Ascending aorta (tissue), 2 donors: ENCODE measurements at regions of chr7 and their contacts with region 1.

Region 1: GRCh38 chr7:25851332-25852210 is 300.4 kb upstream of the NFE2L3 start:
- DNase-seq: peak; percentile 62 to 92
- H3K4me3 ChIP-seq: peak overlapping the region; percentile 27 to 53
- H3K27ac ChIP-seq: peak overlapping the region; percentile 65 to 76
- H3K4me1 ChIP-seq: peaks cover 27 to 54% of the 10 kb centered on the region in 2 donors
- H3K27me3 ChIP-seq: no peaks in the 10 kb centered on the region
- CTCF ChIP-seq: peak; percentile 85 to 89 (median 88)

Region 2: DNA sequence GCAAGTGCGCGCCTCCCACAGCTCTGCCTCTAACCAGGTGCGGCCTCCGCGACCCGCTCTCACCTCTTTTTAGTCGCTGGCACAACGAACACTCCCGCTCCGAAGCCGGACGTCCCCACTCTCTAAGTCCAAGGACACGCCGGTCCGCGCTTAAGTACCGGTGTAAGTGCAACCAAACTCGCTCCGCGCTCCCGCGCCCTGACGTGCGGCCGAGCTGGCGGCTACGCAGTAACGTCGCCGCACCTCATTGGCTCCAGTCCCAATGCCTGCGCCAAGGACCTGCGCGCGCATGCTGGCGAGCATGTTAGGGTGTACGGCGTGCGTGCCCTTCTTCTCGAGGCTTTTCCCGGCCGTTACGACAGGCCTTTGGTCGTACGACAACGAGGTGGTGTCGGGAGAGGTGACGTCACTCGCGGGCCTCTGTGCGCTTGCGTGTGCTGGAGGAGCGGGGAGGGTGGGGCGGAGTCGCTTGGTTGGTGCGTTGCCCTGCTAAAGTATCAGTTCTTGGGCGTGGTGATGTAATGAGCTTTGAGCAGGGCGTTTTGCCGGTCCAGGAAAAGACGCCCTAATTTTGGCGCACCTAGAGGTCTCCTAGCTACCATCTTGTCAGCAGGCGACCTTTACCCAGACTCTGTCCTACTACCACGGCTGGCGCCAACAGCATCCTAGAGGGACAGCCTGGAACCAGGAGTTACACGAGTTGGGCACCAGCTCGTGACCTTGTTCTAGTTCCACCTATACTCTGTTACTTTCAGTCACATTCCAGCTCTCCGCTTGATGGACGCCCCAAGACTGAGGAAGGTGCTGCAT is 726.2 kb before region 1 on chr7 and contains the start of gene CYCS:
- intact Hi-C with region 1: loop called (anchors 5 kb)
- DNase-seq: peak; percentile 98 to 100
- H3K4me3 ChIP-seq: peak within 1 kb of the TSS; percentile 82 to 100
- H3K27ac ChIP-seq: peak within 1 kb of the TSS; percentile 90 to 99
- H3K4me1 ChIP-seq: peaks cover 0 to 4% of the 10 kb centered on the region in 2 donors
- H3K27me3 ChIP-seq: no peaks in the 10 kb centered on the region
- CTCF ChIP-seq: no peak
- total RNA-seq, gene CYCS: 11.5 TPM

Region 3: GRCh38 chr7:25259587-25260243 is 591.9 kb before region 1 on chr7:
- intact Hi-C with region 1: loop called (anchors 1 kb)
- DNase-seq: peak; percentile 9 to 82
- H3K4me3 ChIP-seq: no peak overlapping the region
- H3K27ac ChIP-seq: no peak overlapping the region
- H3K4me1 ChIP-seq: peaks cover 0 to 3% of the 10 kb centered on the region in 2 donors
- H3K27me3 ChIP-seq: no peaks in the 10 kb centered on the region
- CTCF ChIP-seq: peak; percentile 59 to 74 (median 71)

Region 4: GRCh38 chr7:25619963-25620799 is 231.4 kb before region 1 on chr7:
- intact Hi-C with region 1: loop called (anchors 5 kb)
- DNase-seq: no peak
- H3K4me3 ChIP-seq: no peak overlapping the region
- H3K27ac ChIP-seq: peak overlapping the region; percentile 21 to 54
- H3K4me1 ChIP-seq: peaks cover 17 to 37% of the 10 kb centered on the region in 2 donors
- H3K27me3 ChIP-seq: no peaks in the 10 kb centered on the region
- CTCF ChIP-seq: no peak

Region 5: GRCh38 chr7:25752967-25753791 is 98.4 kb before region 1 on chr7:
- intact Hi-C with region 1: loop called (anchors 2 kb)
- DNase-seq: peak in 1 of 2 donors; percentile 67
- H3K4me3 ChIP-seq: no peak overlapping the region
- H3K27ac ChIP-seq: peak overlapping the region; percentile 31 to 72
- H3K4me1 ChIP-seq: peaks cover 0 to 18% of the 10 kb centered on the region in 2 donors
- H3K27me3 ChIP-seq: no peaks in the 10 kb centered on the region
- CTCF ChIP-seq: no peak

Region 6: DNA sequence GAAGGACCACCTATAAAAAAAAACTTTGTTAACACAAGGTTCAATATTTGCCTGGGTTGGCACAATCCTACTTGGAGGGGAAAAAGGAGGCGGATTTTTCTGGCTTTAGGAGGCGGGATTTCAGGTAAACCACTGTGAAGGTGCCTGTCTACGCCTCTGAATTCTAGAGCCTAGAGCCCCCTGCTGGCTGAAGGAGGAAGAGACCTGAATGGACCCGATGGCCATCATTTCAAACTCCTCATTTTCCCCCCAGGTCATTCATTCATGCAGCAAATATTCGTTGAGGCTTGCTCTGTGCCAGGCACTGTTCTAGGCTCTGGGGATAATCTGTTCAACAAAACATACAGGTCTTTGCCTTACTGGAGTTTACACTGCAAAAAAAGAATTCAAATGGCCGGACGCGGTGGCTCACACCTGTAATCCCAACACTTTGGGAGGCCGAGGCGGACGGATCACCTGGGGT is 210.1 kb after region 1 on chr7:
- intact Hi-C with region 1: no loop called
- DNase-seq: peak in 1 of 2 donors; percentile 74
- H3K4me3 ChIP-seq: no peak overlapping the region
- H3K27ac ChIP-seq: no peak overlapping the region
- H3K4me1 ChIP-seq: no peaks in the 10 kb centered on the region
- H3K27me3 ChIP-seq: no peaks in the 10 kb centered on the region
- CTCF ChIP-seq: peak; percentile 21 to 61 (median 54)

Region 7: DNA sequence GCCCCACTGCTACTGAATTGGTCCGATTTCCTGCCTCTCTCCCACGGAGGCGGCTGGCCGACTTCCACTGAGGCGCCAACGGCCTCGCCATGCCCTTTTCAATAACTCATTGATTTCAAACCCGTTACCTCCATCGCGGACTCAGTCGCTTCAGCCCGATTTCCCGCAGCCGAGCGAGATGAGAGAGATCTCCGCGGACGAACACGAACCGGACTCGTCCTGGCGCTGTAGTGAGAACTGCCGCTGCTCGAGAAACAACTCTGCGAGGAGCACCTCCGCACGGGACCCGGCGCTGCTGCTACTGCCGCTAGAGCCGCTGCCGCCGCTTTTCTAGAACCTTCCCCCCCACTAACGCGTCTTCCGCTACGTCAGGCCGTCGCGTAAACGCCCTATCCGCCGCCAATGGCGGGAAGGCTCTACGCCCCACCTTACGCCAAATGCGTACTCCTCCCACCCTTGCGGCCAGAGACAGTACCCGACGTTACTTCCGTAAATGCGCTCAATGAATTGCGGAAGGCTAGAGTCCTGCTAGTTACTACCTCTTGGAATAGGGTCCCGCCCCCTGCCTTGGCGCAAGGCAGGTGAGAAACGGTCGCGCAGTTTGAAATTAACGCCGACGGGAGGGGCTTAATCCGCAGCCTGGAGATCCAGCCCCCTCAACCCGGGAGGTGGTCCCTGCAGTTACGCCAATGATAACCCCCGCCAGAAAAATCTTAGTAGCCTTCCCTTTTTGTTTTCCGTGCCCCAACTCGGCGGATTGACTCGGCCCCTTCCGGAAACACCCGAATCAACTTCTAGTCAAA is 349.1 kb after region 1 on chr7 and contains the start of gene HNRNPA2B1:
- intact Hi-C with region 1: loop called (anchors 5 kb)
- DNase-seq: peak; percentile 93 to 99
- H3K4me3 ChIP-seq: peak within 1 kb of the TSS; percentile 84 to 95
- H3K27ac ChIP-seq: peak within 1 kb of the TSS; percentile 99 to 100
- H3K4me1 ChIP-seq: peaks cover 0 to 43% of the 10 kb centered on the region in 2 donors
- H3K27me3 ChIP-seq: no peaks in the 10 kb centered on the region
- CTCF ChIP-seq: no peak
- total RNA-seq, gene HNRNPA2B1: 57.0 TPM

Region 8: DNA sequence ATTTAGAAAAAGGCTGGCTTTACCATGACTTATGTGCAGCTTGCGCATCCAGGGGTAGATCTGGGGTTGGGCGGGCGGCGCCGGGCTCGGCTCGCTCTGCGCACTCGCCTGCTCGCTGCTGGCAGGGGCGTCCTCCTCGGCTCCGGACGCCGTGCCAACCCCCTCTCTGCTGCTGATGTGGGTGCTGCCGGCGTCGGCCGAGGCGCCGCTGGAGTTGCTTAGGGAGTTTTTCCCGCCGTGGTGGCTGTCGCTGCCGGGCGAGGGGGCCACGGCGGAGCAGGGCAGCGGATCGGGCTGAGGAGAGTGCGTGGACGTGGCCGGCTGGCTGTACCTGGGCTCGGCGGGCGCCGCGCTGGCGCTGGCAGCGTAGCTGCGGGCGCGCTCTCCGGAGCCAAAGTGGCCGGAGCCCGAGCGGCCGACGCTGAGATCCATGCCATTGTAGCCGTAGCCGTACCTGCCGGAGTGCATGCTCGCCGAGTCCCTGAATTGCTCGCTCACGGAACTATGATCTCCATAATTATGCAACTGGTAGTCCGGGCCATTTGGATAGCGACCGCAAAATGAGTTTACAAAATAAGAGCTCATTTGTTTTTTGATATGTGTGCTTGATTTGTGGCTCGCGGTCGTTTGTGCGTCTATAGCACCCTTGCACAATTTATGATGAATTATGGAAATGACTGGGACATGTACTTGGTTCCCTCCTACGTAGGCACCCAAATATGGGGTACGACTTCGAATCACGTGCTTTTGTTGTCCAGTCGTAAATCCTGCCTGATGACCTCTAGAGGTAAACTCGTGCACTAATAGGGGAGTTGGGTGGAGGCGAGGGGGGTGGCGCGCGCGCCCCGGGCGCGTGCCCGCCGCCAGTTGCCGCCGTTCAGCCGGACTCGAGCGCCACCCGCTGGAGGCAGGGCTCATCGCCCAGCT is 1291.7 kb after region 1 on chr7 and contains the start of gene HOXA5:
- intact Hi-C with region 1: loop called (anchors 5 kb)
- DNase-seq: peak; percentile 42 to 94
- H3K4me3 ChIP-seq: peak within 1 kb of the TSS; percentile 75 to 91
- H3K27ac ChIP-seq: peak within 1 kb of the TSS; percentile 92 to 98
- H3K4me1 ChIP-seq: peaks cover 0 to 5% of the 10 kb centered on the region in 2 donors
- H3K27me3 ChIP-seq: no peaks in the 10 kb centered on the region
- CTCF ChIP-seq: peak; percentile 88 to 97 (median 94)
- total RNA-seq, gene HOXA5: 22.0 TPM